Mucosa of descending colon (tissue), 3 donors: ENCODE measurements at regions of chr1 and their contacts with region 1.

Region 1: DNA sequence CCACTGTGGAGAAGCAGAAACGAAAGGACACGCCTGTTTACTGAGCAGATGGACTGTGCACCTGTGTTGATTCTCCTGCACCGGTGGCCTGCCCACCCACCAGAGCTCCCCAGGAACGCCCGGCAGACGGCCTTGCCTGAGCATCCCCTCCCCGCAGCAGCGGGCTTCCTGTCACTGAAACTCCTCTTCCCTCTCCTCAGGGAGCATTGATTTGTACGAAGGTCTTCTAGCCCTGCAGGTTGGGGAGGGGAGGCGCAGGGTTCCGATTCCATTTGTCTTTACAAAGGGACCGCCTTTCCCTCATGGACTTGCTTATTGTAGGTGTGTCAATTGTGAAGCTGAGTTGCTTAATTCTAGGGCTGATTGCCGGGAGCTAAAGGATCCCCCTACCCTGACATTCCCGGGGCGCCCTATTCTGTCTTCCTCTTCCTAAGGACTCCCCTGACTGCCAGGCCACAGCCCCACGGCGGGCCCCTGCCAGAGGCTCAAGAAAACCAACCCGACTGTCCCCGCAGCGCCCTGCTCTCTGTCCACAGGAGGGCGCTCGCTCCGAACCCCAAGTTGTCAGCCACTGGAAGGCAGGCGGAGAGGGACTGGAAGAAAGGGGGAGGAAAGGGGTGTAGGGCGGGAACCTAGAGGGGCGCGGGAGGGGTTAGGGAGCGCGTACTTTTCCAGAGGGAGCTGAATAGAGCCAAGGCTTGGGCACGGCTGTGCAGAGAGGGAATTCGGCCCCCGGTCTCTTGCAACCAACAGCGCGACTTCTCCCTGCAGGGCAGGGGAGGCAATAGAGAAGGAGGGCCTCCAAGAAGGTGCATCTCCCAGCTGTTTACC is 2.8 kb downstream of the S100A6 start:
- DNase-seq: peak; percentile 92 to 95 (median 93)
- ATAC-seq: peak; percentile 65
- H3K4me3 ChIP-seq: no peak overlapping the region
- H3K4me1 ChIP-seq: peaks cover 42% of the 10 kb centered on the region
- CTCF ChIP-seq: peak; percentile 90

Region 2: GRCh38 chr1:153568367-153569099 is 35.5 kb after region 1 on chr1:
- intact Hi-C with region 1: loop called (anchors 5 kb)
- DNase-seq: peak; percentile 90 to 95 (median 93)
- ATAC-seq: peak; percentile 58
- H3K4me3 ChIP-seq: no peak overlapping the region
- H3K4me1 ChIP-seq: peaks cover 36% of the 10 kb centered on the region
- CTCF ChIP-seq: peak; percentile 99